PC-9 (cell line): ENCODE measurements at regions of chr6 and their contacts with region 1.

Region 1: GRCh38 chr6:129370268-129370916 is 339.6 kb downstream of the ARHGAP18 start:
- DNase-seq: peak; percentile 37 to 50
- H3K4me3 ChIP-seq: no peak overlapping the region
- H3K27ac ChIP-seq: no peak overlapping the region
- H3K4me1 ChIP-seq: peaks cover 6% of the 10 kb centered on the region
- H3K27me3 ChIP-seq: no peaks in the 10 kb centered on the region
- CTCF ChIP-seq: peak; percentile 96

Region 2: DNA sequence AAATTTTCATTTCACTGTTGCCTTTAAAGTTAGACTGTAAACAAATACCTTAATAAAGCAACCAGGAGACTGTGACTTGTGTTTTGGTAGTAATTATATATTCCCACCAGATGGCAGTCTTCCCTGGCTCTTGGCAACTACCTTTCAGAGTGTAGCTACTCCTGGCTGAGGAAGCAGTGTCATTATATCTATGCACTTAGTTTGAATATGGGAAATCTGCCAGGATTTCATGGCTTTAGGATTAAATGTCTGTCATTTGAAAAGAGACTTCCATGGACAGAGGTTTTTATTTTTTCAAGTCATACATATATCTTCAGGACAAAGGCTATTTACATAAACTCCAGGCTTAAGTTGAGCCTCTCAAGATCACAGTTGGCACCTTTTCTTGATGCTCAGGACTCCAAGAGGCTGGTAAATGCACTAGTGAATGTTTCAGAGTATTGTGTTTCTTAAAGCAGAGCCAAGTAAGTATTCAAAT is 1633.3 kb before region 1 on chr6:
- CTCF ChIA-PET with region 1: no interaction called
- POLR2A ChIA-PET with region 1: no interaction called
- intact Hi-C with region 1: loop called (anchors 2 kb)
- DNase-seq: peak; percentile 40 to 56
- H3K4me3 ChIP-seq: no peak overlapping the region
- H3K27ac ChIP-seq: no peak overlapping the region
- H3K4me1 ChIP-seq: no peaks in the 10 kb centered on the region
- H3K27me3 ChIP-seq: no peaks in the 10 kb centered on the region
- CTCF ChIP-seq: peak; percentile 92

Region 3: DNA sequence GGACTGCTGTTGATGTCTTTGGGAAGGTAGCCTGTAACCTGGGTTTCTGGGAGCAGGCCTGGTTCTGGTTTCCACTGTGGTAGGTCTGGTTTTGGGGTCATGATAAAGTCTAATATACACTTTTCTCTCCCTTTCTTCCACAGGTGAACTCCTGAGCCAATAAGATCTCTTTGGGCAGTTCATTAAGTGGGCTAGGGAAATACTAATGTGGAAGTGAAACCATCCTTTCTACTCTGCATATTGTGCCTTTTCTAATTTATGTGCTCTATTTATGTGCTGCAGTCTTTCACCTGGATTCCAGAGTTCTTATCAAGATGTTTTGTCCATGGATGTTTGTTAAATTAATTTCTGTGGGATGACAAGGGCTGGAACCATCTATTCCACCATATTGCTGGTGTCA is 684.3 kb before region 1 on chr6:
- CTCF ChIA-PET with region 1: no interaction called
- POLR2A ChIA-PET with region 1: no interaction called
- intact Hi-C with region 1: no loop called
- DNase-seq: no peak
- H3K4me3 ChIP-seq: no peak overlapping the region
- H3K27ac ChIP-seq: no peak overlapping the region
- H3K4me1 ChIP-seq: no peaks in the 10 kb centered on the region
- H3K27me3 ChIP-seq: no peaks in the 10 kb centered on the region
- CTCF ChIP-seq: no peak

Region 4: DNA sequence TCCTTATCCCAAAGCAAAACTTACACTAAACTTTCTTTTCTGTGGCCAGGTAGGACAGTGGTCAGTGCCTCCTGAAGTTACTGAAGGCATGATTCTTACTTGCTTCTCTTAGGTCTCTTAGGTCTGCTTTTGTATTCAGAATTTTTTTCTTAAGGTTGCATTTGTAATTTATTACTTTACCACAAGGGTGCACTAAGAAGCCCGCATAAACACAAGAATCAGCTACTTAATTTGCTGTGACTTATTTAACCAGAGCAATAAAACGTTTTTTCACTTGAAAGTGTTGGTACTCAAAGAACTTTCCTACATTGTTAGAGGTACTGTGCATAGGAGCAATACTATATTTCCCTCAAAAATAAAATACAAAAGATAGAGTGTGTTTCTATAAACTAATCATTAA is 562.8 kb before region 1 on chr6:
- CTCF ChIA-PET with region 1: no interaction called
- POLR2A ChIA-PET with region 1: no interaction called
- intact Hi-C with region 1: loop called (anchors 2 kb)
- DNase-seq: no peak
- H3K4me3 ChIP-seq: no peak overlapping the region
- H3K27ac ChIP-seq: no peak overlapping the region
- H3K4me1 ChIP-seq: no peaks in the 10 kb centered on the region
- H3K27me3 ChIP-seq: no peaks in the 10 kb centered on the region
- CTCF ChIP-seq: peak; percentile 71

Region 5: GRCh38 chr6:129267028-129267427 is 103.4 kb before region 1 on chr6:
- CTCF ChIA-PET with region 1: interaction called, 11 read pairs
- POLR2A ChIA-PET with region 1: no interaction called
- intact Hi-C with region 1: no loop called
- DNase-seq: no peak
- H3K4me3 ChIP-seq: no peak overlapping the region
- H3K27ac ChIP-seq: no peak overlapping the region
- H3K4me1 ChIP-seq: peaks cover 7% of the 10 kb centered on the region; the same call in 1 of the 2 replicates
- H3K27me3 ChIP-seq: no peaks in the 10 kb centered on the region
- CTCF ChIP-seq: no peak

Region 6: DNA sequence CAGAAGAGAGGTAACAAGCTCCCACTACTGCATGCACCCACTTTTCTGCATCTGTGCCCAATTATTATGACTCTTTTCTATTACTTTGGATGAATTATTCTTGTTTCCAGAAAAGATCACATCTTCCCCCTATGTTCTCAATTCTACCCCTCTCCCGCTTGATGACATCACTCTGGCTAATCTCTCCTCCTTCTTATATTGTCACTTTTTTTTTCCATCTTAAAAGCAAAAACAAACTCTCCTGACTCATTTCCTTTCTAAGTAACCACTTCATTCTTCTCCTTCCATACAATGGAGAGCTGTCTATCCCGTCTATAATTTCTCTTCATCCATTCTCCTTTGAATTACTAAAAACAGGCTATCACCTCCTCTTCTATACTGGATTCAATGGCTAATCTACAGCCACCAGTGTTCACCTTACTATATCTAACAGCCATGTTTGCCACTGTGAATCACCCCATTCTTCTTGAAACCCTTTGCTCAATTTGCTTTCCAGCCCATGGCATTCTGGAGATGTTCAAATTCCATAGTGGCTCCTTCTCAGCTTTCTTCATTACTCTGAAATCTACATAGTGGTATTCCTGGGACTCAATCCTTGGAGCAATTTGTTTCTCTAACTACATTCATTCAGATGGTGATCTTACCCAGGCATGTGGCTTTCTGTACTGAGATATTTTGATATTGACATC is 38.8 kb before region 1 on chr6:
- CTCF ChIA-PET with region 1: no interaction called
- POLR2A ChIA-PET with region 1: no interaction called
- intact Hi-C with region 1: no loop called
- DNase-seq: peak in 1 of 2 experiments; percentile 17
- H3K4me3 ChIP-seq: no peak overlapping the region
- H3K27ac ChIP-seq: no peak overlapping the region
- H3K4me1 ChIP-seq: no peaks in the 10 kb centered on the region
- H3K27me3 ChIP-seq: no peaks in the 10 kb centered on the region
- CTCF ChIP-seq: no peak

Region 7: GRCh38 chr6:129575378-129576118 is 205.2 kb after region 1 on chr6:
- CTCF ChIA-PET with region 1: no interaction called
- POLR2A ChIA-PET with region 1: no interaction called
- intact Hi-C with region 1: loop called (anchors 10 kb)
- DNase-seq: peak in 1 of 2 experiments; percentile 66
- H3K4me3 ChIP-seq: peak overlapping the region; percentile 34; the same call in 1 of the 2 replicates
- H3K27ac ChIP-seq: peak overlapping the region; percentile 13; the same call in 1 of the 2 replicates
- H3K4me1 ChIP-seq: peaks cover 6% of the 10 kb centered on the region
- H3K27me3 ChIP-seq: no peaks in the 10 kb centered on the region
- CTCF ChIP-seq: peak; percentile 92